Activated CD8-positive, alpha-beta memory T cell treated with anti-CD3 and anti-CD28 coated beads, Interleukin-2, amount 10 ng/mL, durations not matched to agents 7 days and 5 days (primary cell): ENCODE measurements at regions of chr13 and their contacts with region 1.

Region 1: DNA sequence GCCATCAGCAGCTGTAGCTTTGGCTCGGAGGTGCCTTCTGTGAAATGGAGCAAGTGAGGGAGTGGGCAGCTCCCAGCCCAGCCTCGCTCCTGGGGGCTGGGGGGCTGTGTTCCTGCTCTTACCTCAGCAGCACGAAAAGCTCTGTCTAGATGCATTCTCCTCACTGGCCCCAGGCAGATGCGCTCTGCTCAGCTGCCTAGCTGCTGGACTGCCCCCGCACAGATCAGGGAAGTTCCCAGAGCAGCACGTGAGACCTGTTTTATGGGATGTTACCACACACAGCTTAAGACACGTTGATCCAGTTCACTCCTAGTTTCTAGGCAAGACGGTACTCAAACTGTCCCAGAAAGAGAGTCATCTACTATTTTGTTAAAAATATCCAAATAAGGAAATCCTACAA is 13.6 kb downstream of the LCP1 start:
- DNase-seq: no peak
- ATAC-seq: peak; percentile 7
- H3K4me3 Mint-ChIP-seq: peak overlapping the region; percentile 68
- H3K27ac Mint-ChIP-seq: peak overlapping the region; percentile 91
- H3K4me1 Mint-ChIP-seq: peaks cover 89% of the 10 kb centered on the region
- H3K27me3 Mint-ChIP-seq: no peaks in the 10 kb centered on the region

Region 2: DNA sequence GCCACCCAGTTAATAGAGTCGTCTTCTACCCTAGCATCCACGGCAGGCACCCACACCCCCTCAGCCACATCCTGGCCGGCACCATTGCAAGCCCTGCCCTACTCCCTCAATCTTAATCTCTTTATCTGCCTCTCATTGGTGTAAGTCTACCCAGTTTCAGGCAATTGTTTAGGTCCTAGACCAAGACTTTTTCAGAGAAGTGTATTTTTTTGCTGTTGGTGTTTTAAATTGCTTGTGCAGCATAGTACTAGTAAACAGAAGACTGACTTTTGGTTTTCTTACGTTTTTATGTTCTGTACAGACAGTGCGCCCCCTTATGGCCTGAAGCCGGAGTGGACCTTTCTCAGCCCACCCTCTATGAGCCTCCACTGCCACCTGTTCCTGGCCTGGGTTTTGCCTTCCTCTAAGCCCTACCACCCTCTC is 15.9 kb after region 1 on chr13:
- CTCF ChIA-PET with region 1: interaction called, 46 read pairs
- DNase-seq: peak; percentile 89
- ATAC-seq: peak; percentile 70
- H3K4me3 Mint-ChIP-seq: peak overlapping the region; percentile 96
- H3K27ac Mint-ChIP-seq: peak overlapping the region; percentile 99
- H3K4me1 Mint-ChIP-seq: peaks cover 30% of the 10 kb centered on the region
- H3K27me3 Mint-ChIP-seq: no peaks in the 10 kb centered on the region